Posterior vena cava (tissue), 2 donors: ENCODE measurements at regions of chr5 and their contacts with region 1.

Region 1: DNA sequence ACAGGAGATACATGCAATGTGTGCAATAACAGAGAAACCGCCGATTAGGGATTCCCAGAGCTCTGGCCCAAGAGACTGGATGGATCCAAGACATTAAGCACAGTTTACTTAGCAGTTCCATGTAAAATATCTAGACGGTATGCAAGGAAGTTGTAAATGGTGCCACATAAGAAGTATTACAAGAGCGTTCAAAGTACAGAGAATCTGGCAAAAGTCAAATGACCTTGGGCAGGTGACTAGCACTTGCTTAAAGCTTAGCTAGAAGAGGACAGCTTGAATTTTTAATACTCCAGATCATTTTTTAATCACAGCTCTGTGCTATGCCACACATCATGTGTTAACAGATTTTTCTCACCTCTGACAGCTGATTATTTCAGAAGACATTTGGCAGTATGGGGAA is 72.3 kb upstream of the TNPO1 start:
- DNase-seq: no peak

Region 2: DNA sequence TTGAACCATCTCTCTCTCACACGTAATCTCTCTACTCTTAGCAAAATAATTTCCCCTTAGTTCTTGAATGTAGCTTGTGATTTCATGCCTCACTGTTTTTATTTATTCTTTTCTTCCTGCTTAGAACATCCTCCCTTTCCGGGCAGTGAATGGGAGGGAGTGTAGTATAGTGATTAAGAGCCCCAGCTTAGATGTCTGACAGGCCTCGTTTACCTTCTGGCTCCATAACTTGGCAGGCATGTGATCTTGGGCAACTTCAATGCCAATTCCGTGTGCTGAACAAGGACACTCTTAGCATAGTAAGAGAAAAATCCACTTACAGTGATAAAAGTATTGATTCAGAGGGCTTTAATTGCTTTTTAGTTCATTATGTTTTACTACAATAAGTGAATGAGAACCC is 23.9 kb before region 1 on chr5:
- intact Hi-C with region 1: loop called in 1 of 2 experiments (anchors 2 kb)
- DNase-seq: no peak

Region 3: GRCh38 chr5:72811849-72812248 is 67.7 kb after region 1 on chr5:
- intact Hi-C with region 1: loop called in 1 of 2 experiments (anchors 2 kb)
- DNase-seq: no peak